Posterior cingulate gyrus (tissue), 11 donors: ENCODE measurements at regions of chr5 and their contacts with region 1.

Region 1: DNA sequence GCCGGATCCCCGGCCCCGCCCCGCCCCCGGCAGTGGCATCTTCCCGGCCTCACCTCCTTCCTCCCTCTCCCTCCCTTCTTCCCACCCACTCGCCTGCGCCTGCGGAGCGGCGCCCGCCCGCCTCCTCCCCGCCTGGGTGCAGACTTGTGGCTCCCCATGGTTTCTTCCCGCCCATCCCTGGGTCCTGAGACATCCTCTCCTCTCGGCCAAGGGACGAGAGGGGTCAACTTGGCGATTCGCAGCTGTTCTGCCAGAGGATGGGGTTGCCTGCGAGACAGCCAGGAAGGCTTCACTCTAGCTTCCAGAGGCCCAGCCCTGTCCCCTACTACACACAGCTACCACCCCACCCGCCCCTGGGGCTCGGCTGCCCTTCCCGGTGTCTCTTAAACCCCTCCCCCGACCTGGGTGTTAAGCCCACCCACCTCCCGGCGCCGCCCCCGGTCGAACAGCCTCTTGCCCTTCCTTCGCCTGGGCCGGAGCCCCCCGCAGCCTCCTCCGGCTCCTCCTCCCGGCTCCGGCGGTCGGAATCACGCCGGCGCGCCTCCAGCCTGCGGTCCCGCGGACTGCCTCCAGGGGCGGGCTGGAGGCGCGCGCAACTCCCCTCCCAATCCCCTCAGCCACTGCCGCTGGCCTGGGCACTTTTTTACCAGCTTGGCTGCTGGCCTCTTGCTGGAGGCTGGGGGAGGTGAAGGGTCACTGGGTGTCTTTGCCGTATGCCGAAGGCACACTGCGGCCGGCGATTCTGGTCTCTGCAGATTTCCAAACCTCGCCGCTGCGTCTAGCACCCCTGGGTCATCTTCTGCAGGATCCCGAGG is 1.9 kb downstream of the JADE2 start:
- DNase-seq: peak; percentile 65 to 96 (median 78)

Region 2: GRCh38 chr5:134411546-134412266 is 115.6 kb before region 1 on chr5 and contains the start of gene CDKN2AIPNL:
- intact Hi-C with region 1: loop called (anchors 1 kb)
- DNase-seq: peak; percentile 90 to 99 (median 96)

Region 3: DNA sequence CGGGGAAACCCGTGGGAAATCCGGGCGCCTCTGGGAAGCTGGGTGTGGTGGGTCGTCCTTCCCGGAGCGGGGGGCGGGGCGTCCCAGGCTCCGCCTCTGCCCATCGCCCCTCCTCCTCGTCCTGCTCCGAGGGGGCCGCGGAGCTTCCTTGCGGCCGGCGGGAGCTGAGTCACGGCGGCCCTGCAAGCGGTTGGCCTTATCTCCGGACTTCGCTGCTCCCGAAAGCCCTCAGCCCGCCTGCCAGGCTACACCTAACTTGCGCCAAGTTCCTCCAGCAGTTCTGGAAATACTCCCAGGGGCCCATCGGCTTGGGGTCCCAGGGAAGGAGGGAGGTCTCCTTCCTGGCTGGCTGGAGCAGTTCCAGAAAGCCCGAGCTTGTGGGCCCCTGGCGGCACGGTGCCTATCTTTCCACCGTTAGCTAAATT is 61.5 kb before region 1 on chr5:
- intact Hi-C with region 1: loop called (anchors 1 kb)
- DNase-seq: peak; percentile 49 to 97 (median 79)

Region 4: DNA sequence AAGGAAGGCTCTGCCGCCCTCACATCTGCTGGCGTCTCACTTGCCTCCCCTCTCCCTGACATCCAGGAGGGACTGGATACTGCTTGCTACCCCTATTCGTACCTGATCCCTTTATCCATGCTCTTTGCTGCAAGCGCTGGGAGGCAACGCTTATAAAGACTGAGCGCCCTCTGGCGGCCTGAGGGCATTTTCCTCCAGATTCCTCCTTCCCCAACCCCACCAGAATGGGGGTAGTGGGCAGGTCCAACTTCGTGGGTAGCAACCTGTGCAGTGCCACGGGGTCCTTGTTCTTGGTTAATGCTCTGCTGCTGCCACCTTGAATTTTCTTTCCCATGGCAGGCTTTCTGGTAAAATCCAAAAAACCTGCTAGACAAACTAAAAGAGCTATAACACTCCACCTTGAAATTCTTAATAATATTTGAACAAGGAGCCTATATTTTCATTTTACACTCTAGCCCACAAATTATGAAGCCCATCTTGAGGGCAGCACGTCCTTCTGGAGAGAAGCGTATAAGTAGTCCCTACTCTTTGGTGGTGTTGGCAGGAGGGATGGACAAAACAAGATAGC is 50.5 kb after region 1 on chr5:
- intact Hi-C with region 1: loop called (anchors 5 kb)
- DNase-seq: peak; percentile 58 to 96 (median 83)

Region 5: GRCh38 chr5:134626369-134627014 is 99.1 kb after region 1 on chr5:
- intact Hi-C with region 1: no loop called
- DNase-seq: no peak